ENCODE measurements at regions of chr7 and their contacts with region 1.

Region 1: GRCh38 chr7:113015032-113015645 is 71.5 kb downstream of the GPR85 start:
- DNase-seq: no peak
- H3K4me3 ChIP-seq: no peak overlapping the region
- CTCF ChIP-seq: peak; percentile 20

Region 2: DNA sequence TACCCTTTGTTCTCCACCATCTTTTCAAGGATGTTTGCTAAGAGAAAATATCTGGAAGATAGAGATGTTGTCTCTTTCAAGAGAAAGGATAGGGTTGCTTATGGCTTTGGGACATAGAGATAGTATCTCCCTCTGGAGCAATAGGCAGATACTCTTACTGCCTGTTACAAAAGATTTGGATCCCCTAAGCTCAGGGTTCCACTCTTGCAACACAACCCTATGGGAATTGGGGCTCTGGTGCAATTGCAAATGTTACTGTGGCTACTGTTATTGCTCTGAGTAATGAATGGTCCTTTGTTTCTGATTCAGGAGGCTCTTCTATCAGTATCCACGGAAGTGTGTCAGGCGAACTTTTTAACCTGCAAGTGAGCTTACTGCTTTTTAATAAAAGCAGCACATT is 17.3 kb before region 1 on chr7:
- CTCF ChIA-PET with region 1: interaction called, 14 read pairs
- POLR2A ChIA-PET with region 1: no interaction called
- DNase-seq: no peak
- H3K4me3 ChIP-seq: no peak overlapping the region
- CTCF ChIP-seq: no peak

Region 3: GRCh38 chr7:113044394-113044793 is 29.3 kb after region 1 on chr7:
- CTCF ChIA-PET with region 1: no interaction called
- POLR2A ChIA-PET with region 1: no interaction called
- DNase-seq: no peak
- H3K4me3 ChIP-seq: no peak overlapping the region
- CTCF ChIP-seq: no peak

Region 4: GRCh38 chr7:113118074-113118959 is 103.2 kb after region 1 on chr7 and contains the start of gene SMIM30:
- CTCF ChIA-PET with region 1: no interaction called
- POLR2A ChIA-PET with region 1: no interaction called
- DNase-seq: peak; percentile 44
- H3K4me3 ChIP-seq: peak within 1 kb of the TSS; percentile 67
- CTCF ChIP-seq: no peak

Region 5: DNA sequence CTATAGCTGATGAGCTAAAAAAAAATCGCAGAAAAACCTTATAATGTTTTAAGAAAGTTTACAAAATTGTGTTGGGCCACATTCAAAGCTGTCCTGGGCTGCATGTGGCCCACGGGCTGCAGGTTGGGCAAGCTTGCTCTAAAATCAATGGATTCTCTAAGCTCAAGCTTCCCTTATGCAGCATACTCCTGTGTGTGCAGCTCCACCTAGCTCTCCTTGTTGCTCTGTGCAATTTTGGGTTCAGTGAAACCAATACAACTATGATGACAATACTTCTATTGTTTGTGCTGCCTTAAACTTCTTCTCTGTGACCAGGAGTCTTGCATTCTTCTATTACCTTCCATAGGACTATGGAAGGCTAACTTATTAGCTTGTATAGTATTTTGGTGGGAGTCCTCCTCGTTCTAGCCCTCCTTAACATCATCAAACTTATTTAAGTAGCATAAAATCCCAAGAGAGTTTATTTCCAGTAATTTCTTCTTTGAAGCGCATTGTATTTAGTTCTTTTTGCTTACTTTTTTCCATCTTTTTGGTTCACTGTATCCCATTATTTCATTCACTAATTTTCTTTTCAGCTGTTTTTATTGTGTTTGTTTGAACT is 274.1 kb after region 1 on chr7:
- CTCF ChIA-PET with region 1: interaction called, 19 read pairs
- POLR2A ChIA-PET with region 1: no interaction called
- DNase-seq: no peak
- H3K4me3 ChIP-seq: no peak overlapping the region
- CTCF ChIP-seq: peak; percentile 58

Region 6: GRCh38 chr7:113421696-113422330 is 406.7 kb after region 1 on chr7:
- CTCF ChIA-PET with region 1: interaction called, 44 read pairs
- POLR2A ChIA-PET with region 1: no interaction called
- DNase-seq: peak; percentile 31
- H3K4me3 ChIP-seq: no peak overlapping the region
- CTCF ChIP-seq: peak; percentile 92